GM13976 (cell line): ENCODE measurements at regions of chr1 and their contacts with region 1.

Region 1: GRCh38 chr1:77533660-77534305 is 148.7 kb downstream of the ZZZ3 start:
- DNase-seq: peak; percentile 71
- CTCF ChIP-seq: peak; percentile 73

Region 2: GRCh38 chr1:77143529-77144121 is 390.2 kb before region 1 on chr1:
- in situ Hi-C with region 1: loop called (anchors 10 kb)
- DNase-seq: no peak
- CTCF ChIP-seq: no peak

Region 3: GRCh38 chr1:77473690-77474089 is 60.1 kb before region 1 on chr1:
- in situ Hi-C with region 1: no loop called
- DNase-seq: no peak
- CTCF ChIP-seq: no peak